SK-N-SH (cell line): ENCODE measurements at regions of chr5 and their contacts with region 1.

Region 1: GRCh38 chr5:131423056-131423455 is 159.2 kb downstream of the CDC42SE2 start:
- DNase-seq: peak; percentile 52
- H3K4me3 ChIP-seq: no peak overlapping the region
- H3K27ac ChIP-seq: no peak overlapping the region
- H3K4me1 ChIP-seq: no peaks in the 10 kb centered on the region
- H3K27me3 ChIP-seq: no peaks in the 10 kb centered on the region
- CTCF ChIP-seq: peak; percentile 75
- EP300 ChIP-seq: no peak
- RAD21 ChIP-seq: peak; percentile 84

Region 2: DNA sequence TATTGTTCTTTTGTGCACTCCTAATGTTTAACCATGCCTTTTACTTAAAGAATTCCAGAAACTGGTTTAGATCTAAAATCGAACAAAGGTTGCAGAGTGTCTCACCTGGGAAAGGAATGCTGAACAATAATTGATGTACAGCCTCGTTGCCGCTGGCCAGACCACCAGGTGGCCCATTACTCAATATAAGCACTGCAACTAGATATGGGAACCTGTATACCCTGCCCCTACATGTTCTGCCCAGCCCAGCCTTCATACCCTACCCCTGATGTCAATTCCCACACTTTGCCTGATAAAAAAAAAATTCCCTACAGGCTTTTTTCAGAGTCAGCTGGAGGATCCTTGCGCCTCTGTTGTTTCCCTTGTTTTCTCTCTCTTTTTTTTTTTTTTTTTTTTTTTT is 271.8 kb before region 1 on chr5:
- CTCF ChIA-PET with region 1: no interaction called
- POLR2A ChIA-PET with region 1: no interaction called
- DNase-seq: no peak
- H3K4me3 ChIP-seq: no peak overlapping the region
- H3K27ac ChIP-seq: no peak overlapping the region
- H3K4me1 ChIP-seq: no peaks in the 10 kb centered on the region
- H3K27me3 ChIP-seq: no peaks in the 10 kb centered on the region
- CTCF ChIP-seq: no peak
- EP300 ChIP-seq: no peak
- RAD21 ChIP-seq: no peak

Region 3: GRCh38 chr5:131270809-131271208 is 152.2 kb before region 1 on chr5:
- CTCF ChIA-PET with region 1: no interaction called
- POLR2A ChIA-PET with region 1: no interaction called
- DNase-seq: no peak
- H3K4me3 ChIP-seq: no peak overlapping the region
- H3K27ac ChIP-seq: peak overlapping the region in 1 of 2 experiments; percentile 49; a peak in 2 of 4 replicates
- H3K4me1 ChIP-seq: peaks cover 2 to 17% of the 10 kb centered on the region in 2 experiments; a peak in 2 of 4 replicates
- H3K27me3 ChIP-seq: no peaks in the 10 kb centered on the region
- CTCF ChIP-seq: no peak
- EP300 ChIP-seq: peak in 1 of 2 experiments; percentile 56; a peak in 1 of 4 replicates
- RAD21 ChIP-seq: no peak

Region 4: DNA sequence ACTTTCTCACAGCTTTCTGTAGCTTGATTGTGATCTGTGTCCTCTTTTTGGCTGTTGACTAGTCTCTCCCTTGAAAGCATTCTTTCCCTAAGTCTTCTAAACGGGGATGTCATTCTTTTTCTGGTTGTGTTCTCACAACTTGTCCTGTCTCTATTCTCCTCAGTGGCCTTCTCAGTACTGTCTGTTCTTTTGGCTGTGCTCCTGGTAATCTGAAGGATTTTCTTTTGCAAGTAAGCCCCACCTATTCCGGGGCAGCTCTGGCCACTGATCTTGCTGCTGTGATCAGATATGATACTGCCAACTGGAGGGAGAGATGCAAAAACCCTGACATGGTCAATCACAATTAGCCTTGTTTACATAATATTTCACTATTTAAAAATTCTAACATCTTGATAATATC is 13.0 kb after region 1 on chr5:
- CTCF ChIA-PET with region 1: interaction called, 17 read pairs
- POLR2A ChIA-PET with region 1: no interaction called
- DNase-seq: no peak
- H3K4me3 ChIP-seq: no peak overlapping the region
- H3K27ac ChIP-seq: no peak overlapping the region
- H3K4me1 ChIP-seq: peaks cover 0 to 2% of the 10 kb centered on the region in 2 experiments; a peak in 1 of 4 replicates
- H3K27me3 ChIP-seq: no peaks in the 10 kb centered on the region
- CTCF ChIP-seq: no peak
- EP300 ChIP-seq: no peak
- RAD21 ChIP-seq: no peak

Region 5: DNA sequence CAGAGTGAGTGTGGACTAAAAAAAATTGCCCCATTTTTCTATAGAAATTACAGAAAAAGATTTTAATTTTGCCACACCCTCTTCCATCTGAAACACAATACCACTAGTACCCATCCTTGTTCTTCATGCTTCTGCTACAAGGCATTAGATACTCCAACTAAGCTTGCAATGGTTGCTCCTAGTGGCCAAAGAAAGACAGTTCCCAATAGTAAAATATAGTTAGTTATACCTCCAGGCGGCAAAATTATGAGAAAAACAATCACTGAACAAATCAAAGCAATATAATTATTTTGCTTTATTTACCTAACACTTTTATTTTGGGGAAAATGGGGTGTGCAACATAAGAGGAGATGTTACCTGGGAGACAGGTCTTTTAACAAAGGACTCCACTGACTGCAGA is 110.8 kb after region 1 on chr5:
- CTCF ChIA-PET with region 1: interaction called, 17 read pairs
- POLR2A ChIA-PET with region 1: no interaction called
- DNase-seq: no peak
- H3K4me3 ChIP-seq: no peak overlapping the region
- H3K27ac ChIP-seq: peak overlapping the region in 1 of 2 experiments; percentile 12; a peak in 1 of 4 replicates
- H3K4me1 ChIP-seq: peaks cover 17 to 36% of the 10 kb centered on the region in 2 experiments
- H3K27me3 ChIP-seq: no peaks in the 10 kb centered on the region
- CTCF ChIP-seq: peak; percentile 54
- EP300 ChIP-seq: no peak
- RAD21 ChIP-seq: no peak

Region 6: GRCh38 chr5:132007399-132008165 is 584.5 kb after region 1 on chr5:
- CTCF ChIA-PET with region 1: interaction called, 15 read pairs
- POLR2A ChIA-PET with region 1: no interaction called
- DNase-seq: peak; percentile 75
- H3K4me3 ChIP-seq: no peak overlapping the region; a peak in 1 of 4 replicates
- H3K27ac ChIP-seq: no peak overlapping the region
- H3K4me1 ChIP-seq: peaks cover 0 to 9% of the 10 kb centered on the region in 2 experiments; a peak in 1 of 4 replicates
- H3K27me3 ChIP-seq: no peaks in the 10 kb centered on the region
- CTCF ChIP-seq: peak; percentile 72
- EP300 ChIP-seq: no peak
- RAD21 ChIP-seq: peak; percentile 92